Astrocyte of the cerebellum (primary cell): ENCODE measurements at regions of chr14 and their contacts with region 1.

Region 1: DNA sequence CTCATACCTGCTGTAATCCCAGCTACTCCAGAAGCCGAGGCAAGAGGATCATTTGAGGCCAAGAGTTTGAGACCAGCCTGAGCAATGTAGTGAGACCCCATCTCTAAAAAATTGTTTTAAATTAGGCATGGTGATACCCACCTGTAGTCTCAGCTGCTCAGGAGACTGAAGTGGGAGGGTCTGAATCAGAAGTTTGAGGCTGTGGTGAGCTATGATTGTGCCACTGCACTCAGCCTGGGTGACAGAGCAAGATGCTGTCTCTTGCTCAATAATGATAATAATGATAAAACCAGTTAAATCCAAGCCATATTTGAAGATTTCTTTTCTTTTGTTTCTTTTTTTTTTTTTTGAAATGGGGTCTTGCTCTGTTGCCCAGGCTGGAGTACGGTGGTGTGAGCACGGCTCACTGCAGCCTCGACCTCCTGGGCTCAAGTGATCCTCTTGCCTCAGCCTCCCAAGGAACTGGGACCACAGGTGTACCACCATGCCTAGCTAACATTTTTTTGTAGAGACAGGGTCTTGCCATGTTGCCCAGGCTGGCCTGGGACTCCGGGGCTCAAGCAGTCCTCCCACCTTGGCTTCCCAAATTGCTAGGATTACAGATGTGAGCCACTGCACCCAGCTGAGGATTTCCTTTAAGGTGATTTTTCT is 12.8 kb downstream of the PSMA6 start:
- DNase-seq: no peak
- H3K4me3 ChIP-seq: no peak overlapping the region
- CTCF ChIP-seq: no peak

Region 2: DNA sequence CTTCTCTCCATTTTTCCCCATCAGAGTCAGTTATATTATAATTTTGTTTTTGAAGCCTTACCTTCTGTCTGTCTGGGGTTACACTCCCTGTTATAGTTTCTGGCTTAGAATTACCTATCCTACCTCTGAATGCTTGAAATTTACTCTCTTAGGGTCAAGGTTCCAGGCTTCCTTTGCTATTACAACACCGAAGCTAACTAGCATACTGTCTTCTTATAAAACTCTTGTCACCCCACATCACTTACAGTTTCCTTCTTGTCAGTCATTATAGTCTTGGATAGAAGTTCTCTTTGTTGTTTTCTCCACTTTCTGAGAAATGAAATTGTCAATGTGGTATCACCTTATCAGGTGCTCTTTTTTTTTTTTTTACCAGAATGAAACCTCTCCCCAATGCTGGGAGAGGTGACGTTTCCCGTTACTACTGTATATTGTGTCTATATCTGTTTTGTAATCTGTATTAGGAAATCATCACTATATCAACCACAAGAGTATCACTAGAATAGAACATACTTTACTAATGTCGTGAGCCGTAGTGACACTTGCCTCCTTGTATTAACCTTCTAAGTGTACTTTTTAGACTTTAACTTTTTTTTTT is 82.0 kb before region 1 on chr14:
- in situ Hi-C with region 1: loop called (anchors 5 kb)
- DNase-seq: no peak
- H3K4me3 ChIP-seq: no peak overlapping the region
- CTCF ChIP-seq: no peak

Region 3: GRCh38 chr14:35240231-35240630 is 64.7 kb before region 1 on chr14:
- in situ Hi-C with region 1: no loop called
- DNase-seq: no peak
- H3K4me3 ChIP-seq: no peak overlapping the region
- CTCF ChIP-seq: no peak

Region 4: DNA sequence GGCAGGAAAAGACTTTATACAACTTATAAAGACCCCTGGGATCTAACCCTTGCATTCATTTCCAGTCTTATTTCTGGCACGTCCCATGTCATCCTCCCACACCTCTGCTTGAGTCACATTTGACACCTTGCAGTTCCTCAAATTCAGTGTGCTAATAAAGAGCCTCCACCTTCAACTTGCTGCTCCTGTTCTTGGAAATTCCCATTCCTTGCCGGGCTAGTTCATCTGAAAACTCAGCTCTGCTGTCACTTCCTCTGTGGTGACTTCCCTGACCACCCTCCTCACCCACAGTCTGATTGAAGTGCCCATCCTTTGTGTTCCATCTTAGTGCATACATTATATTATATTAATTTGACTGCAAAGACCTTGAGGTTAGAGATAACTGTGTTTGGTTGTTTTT is 50.2 kb before region 1 on chr14:
- in situ Hi-C with region 1: no loop called
- DNase-seq: no peak
- H3K4me3 ChIP-seq: no peak overlapping the region
- CTCF ChIP-seq: no peak